Natural killer cell (primary cell): ENCODE measurements at regions of chrX and their contacts with region 1.

Region 1: DNA sequence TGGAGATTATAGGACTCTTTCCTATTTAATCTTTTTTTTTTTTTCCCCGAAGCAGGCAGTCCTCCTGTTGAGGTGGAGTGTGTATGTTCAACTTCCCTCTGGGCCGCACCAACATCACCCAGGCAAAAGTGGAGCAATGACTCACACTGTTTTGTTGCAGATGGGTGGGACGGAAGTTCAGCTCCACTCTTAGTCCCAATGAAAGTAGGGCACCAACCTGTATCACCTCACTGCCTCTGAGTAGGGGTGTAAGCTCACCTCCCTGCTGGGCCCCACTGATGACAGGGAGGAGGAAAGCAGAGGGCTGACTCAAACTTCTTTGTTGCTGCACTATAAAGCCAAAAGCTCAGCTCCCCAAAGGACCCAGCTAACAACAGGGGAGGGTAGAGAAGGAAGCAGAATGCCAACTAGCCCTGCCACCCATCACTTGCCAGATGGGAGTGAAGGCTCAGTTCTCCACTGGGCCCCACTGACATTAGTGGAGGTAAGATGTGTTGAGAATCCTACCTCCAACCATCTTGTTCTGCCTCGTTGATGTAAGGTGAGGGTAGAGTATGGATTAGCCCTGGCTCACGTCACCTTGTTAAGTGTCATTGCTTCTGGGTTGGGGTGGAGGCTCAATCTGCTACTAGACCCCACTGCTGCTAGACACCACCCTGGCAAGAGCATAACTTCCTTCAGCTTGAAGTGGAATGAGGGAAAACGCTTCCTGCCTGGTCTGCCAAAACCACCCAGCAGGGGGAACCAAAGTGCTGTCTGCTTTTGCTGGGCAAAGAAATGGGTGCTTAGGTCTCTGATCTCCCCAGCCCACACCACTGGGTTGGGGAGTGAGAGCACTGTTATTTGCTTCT is 14.1 kb downstream of the RPS6KA3 start:
- DNase-seq: peak; percentile 66 to 86
- ATAC-seq: peak; percentile 81 to 87 (median 82)
- H3K4me3 ChIP-seq: no peak overlapping the region
- H3K4me3 Mint-ChIP-seq: no peak overlapping the region
- H3K27ac ChIP-seq: peak overlapping the region; percentile 53
- H3K27ac Mint-ChIP-seq: peak overlapping the region; percentile 30 to 81
- H3K4me1 ChIP-seq: peaks cover 14% of the 10 kb centered on the region
- H3K4me1 Mint-ChIP-seq: peaks cover 19 to 40% of the 10 kb centered on the region in 2 donors
- H3K27me3 ChIP-seq: no peaks in the 10 kb centered on the region
- H3K27me3 Mint-ChIP-seq: no peaks in the 10 kb centered on the region
- CTCF ChIP-seq: peak; percentile 58

Region 2: GRCh38 chrX:20141281-20142220 is 111.1 kb before region 1 on chrX and contains the start of gene EIF1AX:
- intact Hi-C with region 1: no loop called
- DNase-seq: peak; percentile 89 to 96
- ATAC-seq: peak; percentile 96 to 100 (median 97)
- H3K4me3 ChIP-seq: peak within 1 kb of the TSS; percentile 90
- H3K4me3 Mint-ChIP-seq: peak within 1 kb of the TSS; percentile 92
- H3K27ac ChIP-seq: peak within 1 kb of the TSS; percentile 79
- H3K27ac Mint-ChIP-seq: peak within 1 kb of the TSS; percentile 91 to 94
- H3K4me1 ChIP-seq: peaks cover 9% of the 10 kb centered on the region
- H3K4me1 Mint-ChIP-seq: peaks cover 19 to 25% of the 10 kb centered on the region in 2 donors
- H3K27me3 ChIP-seq: no peaks in the 10 kb centered on the region
- H3K27me3 Mint-ChIP-seq: no peaks in the 10 kb centered on the region
- CTCF ChIP-seq: no peak
- total RNA-seq, gene EIF1AX: 31.6 to 57.2 (median 31.7) TPM

Region 3: DNA sequence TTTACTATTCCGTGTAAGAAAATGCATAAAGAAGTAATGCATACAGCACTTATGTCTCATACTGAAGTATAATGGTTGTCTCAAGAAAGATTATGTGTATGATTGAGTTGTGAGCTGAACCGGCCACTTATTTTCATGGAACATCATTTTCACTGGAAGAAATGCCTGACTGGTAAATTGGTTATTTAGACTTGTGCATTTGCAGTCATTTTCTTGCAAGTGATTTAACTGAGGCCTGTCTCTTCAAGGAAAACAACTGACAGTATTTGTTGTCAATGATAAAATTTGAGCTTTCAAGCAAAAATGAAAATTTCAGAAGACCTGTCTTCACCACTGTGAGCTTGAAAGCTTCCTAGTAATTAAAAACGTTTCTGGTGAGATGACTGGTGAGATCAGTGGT is 76.8 kb after region 1 on chrX:
- intact Hi-C with region 1: loop called (anchors 2 kb)
- DNase-seq: no peak
- ATAC-seq: no peak
- H3K4me3 ChIP-seq: no peak overlapping the region
- H3K4me3 Mint-ChIP-seq: no peak overlapping the region
- H3K27ac ChIP-seq: no peak overlapping the region
- H3K27ac Mint-ChIP-seq: no peak overlapping the region
- H3K4me1 ChIP-seq: no peaks in the 10 kb centered on the region
- H3K4me1 Mint-ChIP-seq: no peaks in the 10 kb centered on the region
- H3K27me3 ChIP-seq: no peaks in the 10 kb centered on the region
- H3K27me3 Mint-ChIP-seq: peaks cover 3 to 8% of the 10 kb centered on the region in 2 donors
- CTCF ChIP-seq: no peak

Region 4: DNA sequence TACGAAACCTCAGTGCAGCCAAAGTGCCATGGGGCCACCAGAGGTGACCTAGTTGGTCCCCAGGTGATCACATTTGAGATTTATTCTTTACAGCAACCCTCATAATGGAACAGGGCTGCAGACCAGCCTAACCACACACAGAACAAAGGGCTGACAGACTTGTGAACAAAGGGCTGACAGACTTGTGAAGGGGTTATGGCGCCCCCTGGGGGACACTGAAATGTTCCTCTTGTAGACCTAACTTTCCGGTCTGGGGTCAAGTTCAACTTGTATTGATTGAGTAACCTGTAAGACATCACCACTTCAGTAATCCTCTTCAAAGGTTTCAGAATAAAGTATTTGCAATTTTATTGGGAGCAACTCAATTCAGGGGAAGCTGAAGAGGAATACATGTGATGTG is 190.0 kb after region 1 on chrX:
- intact Hi-C with region 1: loop called (anchors 1 kb)
- DNase-seq: peak; percentile 75 to 91
- ATAC-seq: peak; percentile 81 to 95 (median 92)
- H3K4me3 ChIP-seq: no peak overlapping the region
- H3K4me3 Mint-ChIP-seq: no peak overlapping the region
- H3K27ac ChIP-seq: no peak overlapping the region
- H3K27ac Mint-ChIP-seq: no peak overlapping the region
- H3K4me1 ChIP-seq: peaks cover 15% of the 10 kb centered on the region
- H3K4me1 Mint-ChIP-seq: peaks cover 7 to 26% of the 10 kb centered on the region in 2 donors
- H3K27me3 ChIP-seq: no peaks in the 10 kb centered on the region
- H3K27me3 Mint-ChIP-seq: no peaks in the 10 kb centered on the region
- CTCF ChIP-seq: peak; percentile 64